ENCODE measurements at regions of chr1 and their contacts with region 1.

Region 1: DNA sequence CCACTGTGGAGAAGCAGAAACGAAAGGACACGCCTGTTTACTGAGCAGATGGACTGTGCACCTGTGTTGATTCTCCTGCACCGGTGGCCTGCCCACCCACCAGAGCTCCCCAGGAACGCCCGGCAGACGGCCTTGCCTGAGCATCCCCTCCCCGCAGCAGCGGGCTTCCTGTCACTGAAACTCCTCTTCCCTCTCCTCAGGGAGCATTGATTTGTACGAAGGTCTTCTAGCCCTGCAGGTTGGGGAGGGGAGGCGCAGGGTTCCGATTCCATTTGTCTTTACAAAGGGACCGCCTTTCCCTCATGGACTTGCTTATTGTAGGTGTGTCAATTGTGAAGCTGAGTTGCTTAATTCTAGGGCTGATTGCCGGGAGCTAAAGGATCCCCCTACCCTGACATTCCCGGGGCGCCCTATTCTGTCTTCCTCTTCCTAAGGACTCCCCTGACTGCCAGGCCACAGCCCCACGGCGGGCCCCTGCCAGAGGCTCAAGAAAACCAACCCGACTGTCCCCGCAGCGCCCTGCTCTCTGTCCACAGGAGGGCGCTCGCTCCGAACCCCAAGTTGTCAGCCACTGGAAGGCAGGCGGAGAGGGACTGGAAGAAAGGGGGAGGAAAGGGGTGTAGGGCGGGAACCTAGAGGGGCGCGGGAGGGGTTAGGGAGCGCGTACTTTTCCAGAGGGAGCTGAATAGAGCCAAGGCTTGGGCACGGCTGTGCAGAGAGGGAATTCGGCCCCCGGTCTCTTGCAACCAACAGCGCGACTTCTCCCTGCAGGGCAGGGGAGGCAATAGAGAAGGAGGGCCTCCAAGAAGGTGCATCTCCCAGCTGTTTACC is 2.8 kb downstream of the S100A6 start:
- DNase-seq: peak; percentile 65 to 95
- H3K4me3 ChIP-seq: peak overlapping the region; percentile 70 to 95
- H3K27ac ChIP-seq: peak overlapping the region; percentile 98 to 100
- H3K4me1 ChIP-seq: peaks cover 5 to 27% of the 10 kb centered on the region in 2 donors
- H3K27me3 ChIP-seq: no peaks in the 10 kb centered on the region
- CTCF ChIP-seq: peak; percentile 94 to 96 (median 96)

Region 2: DNA sequence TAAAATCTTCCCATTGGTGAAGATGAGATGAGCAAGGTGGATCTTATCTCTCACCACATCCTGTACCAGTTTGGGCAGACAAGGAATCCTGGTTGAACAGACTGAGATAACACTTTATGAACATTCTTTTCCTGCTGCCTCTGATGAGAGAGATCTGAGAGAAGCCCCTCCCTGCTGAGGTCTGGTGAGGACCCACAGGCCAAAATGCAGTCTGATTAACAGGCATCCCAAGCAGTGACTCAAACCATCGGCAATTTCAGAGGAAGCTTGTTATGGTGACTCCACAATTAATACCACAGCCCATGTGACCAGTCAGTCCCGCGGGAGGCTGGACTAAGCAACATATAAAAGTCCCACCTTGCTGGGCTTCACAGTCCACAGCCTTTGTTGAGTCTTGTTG is 315.8 kb before region 1 on chr1 and contains the start of gene PRR9:
- intact Hi-C with region 1: no loop called
- DNase-seq: no peak
- H3K4me3 ChIP-seq: no peak within 1 kb of the TSS
- H3K27ac ChIP-seq: no peak within 1 kb of the TSS
- H3K4me1 ChIP-seq: no peaks in the 10 kb centered on the region
- H3K27me3 ChIP-seq: no peaks in the 10 kb centered on the region
- CTCF ChIP-seq: no peak
- total RNA-seq, gene PRR9: not detected

Region 3: DNA sequence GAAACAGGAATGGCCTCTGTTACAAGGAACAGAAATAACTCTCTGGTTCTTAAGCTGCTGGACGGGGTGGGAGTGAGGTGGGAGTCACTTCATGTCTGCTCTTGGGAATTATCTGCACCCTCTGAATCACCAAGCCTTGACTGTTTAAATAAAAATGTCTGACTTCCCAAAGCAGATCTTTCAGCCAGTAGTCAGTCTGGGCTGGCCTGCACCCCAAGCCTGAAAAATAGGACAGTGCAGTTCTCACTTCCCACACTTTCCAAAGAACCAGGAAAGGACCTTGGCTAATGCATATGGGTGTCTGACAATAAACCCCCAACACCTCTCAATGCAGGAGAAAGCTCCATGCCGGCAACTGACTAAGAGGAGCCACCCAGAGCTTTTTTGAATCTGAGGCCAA is 73.3 kb before region 1 on chr1:
- intact Hi-C with region 1: no loop called
- DNase-seq: no peak
- H3K4me3 ChIP-seq: no peak overlapping the region
- H3K27ac ChIP-seq: no peak overlapping the region
- H3K4me1 ChIP-seq: no peaks in the 10 kb centered on the region
- H3K27me3 ChIP-seq: no peaks in the 10 kb centered on the region
- CTCF ChIP-seq: no peak

Region 4: GRCh38 chr1:153545067-153546055 is 12.4 kb after region 1 on chr1 and contains the start of gene S100A4:
- intact Hi-C with region 1: loop called (anchors 1 kb)
- DNase-seq: peak; percentile 84 to 97
- H3K4me3 ChIP-seq: peak within 1 kb of the TSS; percentile 47 to 68
- H3K27ac ChIP-seq: peak within 1 kb of the TSS; percentile 90 to 92
- H3K4me1 ChIP-seq: peaks cover 48 to 73% of the 10 kb centered on the region in 2 donors
- H3K27me3 ChIP-seq: no peaks in the 10 kb centered on the region
- CTCF ChIP-seq: no peak
- total RNA-seq, gene S100A4: 690 TPM

Region 5: GRCh38 chr1:153617675-153618074 is 84.7 kb after region 1 on chr1:
- intact Hi-C with region 1: loop called (anchors 2 kb)
- DNase-seq: peak in 1 of 2 donors; percentile 92
- H3K4me3 ChIP-seq: no peak overlapping the region
- H3K27ac ChIP-seq: peak overlapping the region in 1 of 2 donors; percentile 49
- H3K4me1 ChIP-seq: peaks cover 0 to 12% of the 10 kb centered on the region in 2 donors
- H3K27me3 ChIP-seq: no peaks in the 10 kb centered on the region
- CTCF ChIP-seq: peak; percentile 58 to 73 (median 58)

Region 6: DNA sequence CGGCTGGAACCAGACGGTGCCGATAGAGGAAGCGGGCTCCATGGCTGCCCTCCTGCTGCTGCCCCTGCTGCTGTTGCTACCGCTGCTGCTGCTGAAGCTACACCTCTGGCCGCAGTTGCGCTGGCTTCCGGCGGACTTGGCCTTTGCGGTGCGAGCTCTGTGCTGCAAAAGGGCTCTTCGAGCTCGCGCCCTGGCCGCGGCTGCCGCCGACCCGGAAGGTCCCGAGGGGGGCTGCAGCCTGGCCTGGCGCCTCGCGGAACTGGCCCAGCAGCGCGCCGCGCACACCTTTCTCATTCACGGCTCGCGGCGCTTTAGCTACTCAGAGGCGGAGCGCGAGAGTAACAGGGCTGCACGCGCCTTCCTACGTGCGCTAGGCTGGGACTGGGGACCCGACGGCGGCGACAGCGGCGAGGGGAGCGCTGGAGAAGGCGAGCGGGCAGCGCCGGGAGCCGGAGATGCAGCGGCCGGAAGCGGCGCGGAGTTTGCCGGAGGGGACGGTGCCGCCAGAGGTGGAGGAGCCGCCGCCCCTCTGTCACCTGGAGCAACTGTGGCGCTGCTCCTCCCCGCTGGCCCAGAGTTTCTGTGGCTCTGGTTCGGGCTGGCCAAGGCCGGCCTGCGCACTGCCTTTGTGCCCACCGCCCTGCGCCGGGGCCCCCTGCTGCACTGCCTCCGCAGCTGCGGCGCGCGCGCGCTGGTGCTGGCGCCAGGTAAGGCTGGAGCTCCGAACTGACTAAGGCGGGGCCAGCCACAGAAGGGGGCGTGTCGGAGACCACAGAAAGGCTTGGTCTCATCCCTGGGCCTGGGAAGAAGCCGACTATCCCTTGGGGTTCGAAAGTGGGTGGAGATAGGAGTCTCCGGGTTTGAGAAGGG is 242.7 kb after region 1 on chr1:
- intact Hi-C with region 1: loop called (anchors 10 kb)
- DNase-seq: peak in 1 of 2 donors; percentile 88
- H3K4me3 ChIP-seq: peak overlapping the region; percentile 78 to 85
- H3K27ac ChIP-seq: peak overlapping the region; percentile 92 to 93
- H3K4me1 ChIP-seq: peaks cover 22 to 60% of the 10 kb centered on the region in 2 donors
- H3K27me3 ChIP-seq: no peaks in the 10 kb centered on the region
- CTCF ChIP-seq: peak in 1 of 3 experiments; percentile 25

Measured in ascending aorta (tissue), 2 donors.